ENCODE measurements at regions of chr6 and their contacts with region 1.

Region 1: GRCh38 chr6:157527471-157527907 is 146.5 kb downstream of the ZDHHC14 start:
- DNase-seq: no peak
- ATAC-seq: peak; percentile 76
- H3K4me3 Mint-ChIP-seq: peak overlapping the region; percentile 38
- H3K27ac Mint-ChIP-seq: no peak overlapping the region
- H3K4me1 Mint-ChIP-seq: peaks cover 46% of the 10 kb centered on the region
- H3K27me3 Mint-ChIP-seq: no peaks in the 10 kb centered on the region
- CTCF ChIP-seq: no peak

Region 2: DNA sequence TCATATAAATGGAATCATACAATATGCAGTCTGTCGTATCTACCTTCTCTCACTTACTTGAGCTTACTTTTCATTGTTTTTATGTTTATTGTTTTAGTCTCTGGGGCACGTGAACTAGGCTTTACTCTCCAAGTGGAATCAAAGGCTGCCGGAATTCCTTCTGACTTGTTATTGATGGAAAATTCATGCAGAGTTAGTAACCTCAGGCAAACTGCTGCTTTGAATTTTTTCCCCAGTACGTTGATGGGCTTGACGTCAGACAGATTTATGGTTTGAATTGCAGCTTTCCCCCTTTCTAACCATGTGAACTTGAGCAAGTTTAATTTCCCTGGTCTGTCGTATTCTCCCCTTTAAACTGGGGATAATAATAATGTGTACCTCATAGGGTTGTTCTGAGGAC is 77.9 kb before region 1 on chr6:
- CTCF ChIA-PET with region 1: no interaction called
- POLR2A ChIA-PET with region 1: no interaction called
- intact Hi-C with region 1: no loop called
- DNase-seq: no peak
- ATAC-seq: no peak
- H3K4me3 Mint-ChIP-seq: no peak overlapping the region
- H3K27ac Mint-ChIP-seq: no peak overlapping the region
- H3K4me1 Mint-ChIP-seq: no peaks in the 10 kb centered on the region
- H3K27me3 Mint-ChIP-seq: no peaks in the 10 kb centered on the region
- CTCF ChIP-seq: no peak

Region 3: GRCh38 chr6:157486572-157486971 is 40.9 kb before region 1 on chr6:
- CTCF ChIA-PET with region 1: no interaction called
- POLR2A ChIA-PET with region 1: no interaction called
- intact Hi-C with region 1: loop called (anchors 5 kb)
- DNase-seq: no peak
- ATAC-seq: peak; percentile 57
- H3K4me3 Mint-ChIP-seq: peak overlapping the region; percentile 12
- H3K27ac Mint-ChIP-seq: peak overlapping the region; percentile 72
- H3K4me1 Mint-ChIP-seq: peaks cover 50% of the 10 kb centered on the region
- H3K27me3 Mint-ChIP-seq: no peaks in the 10 kb centered on the region
- CTCF ChIP-seq: no peak